ENCODE measurements at regions of chr3 and their contacts with region 1.

Region 1: GRCh38 chr3:168040607-168041208 is 55.0 kb downstream of the GOLIM4 start:
- DNase-seq: no peak
- CTCF ChIP-seq: peak; percentile 39

Region 2: GRCh38 chr3:167304077-167304476 is 736.6 kb before region 1 on chr3:
- in situ Hi-C with region 1: no loop called
- DNase-seq: no peak
- CTCF ChIP-seq: no peak

Region 3: DNA sequence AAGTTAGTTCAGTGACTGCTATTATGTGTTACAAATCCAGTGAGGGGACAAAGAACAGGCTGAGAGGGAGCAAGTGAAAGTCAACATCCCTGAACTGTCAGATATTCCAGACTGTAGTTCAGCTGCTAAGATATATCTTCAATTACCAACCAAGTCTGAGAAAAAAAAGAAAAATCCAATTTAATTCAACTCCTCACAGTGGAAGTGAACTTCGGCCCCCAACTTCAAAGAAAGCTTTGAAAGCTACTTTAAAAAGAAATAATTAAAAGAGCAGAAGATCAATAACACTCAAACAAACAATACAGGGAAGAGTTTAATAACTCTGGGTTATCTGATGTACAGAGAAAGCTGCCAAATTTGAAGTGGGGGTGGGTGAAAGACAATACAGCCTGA is 131.2 kb before region 1 on chr3:
- in situ Hi-C with region 1: no loop called
- DNase-seq: no peak
- CTCF ChIP-seq: no peak

Region 4: DNA sequence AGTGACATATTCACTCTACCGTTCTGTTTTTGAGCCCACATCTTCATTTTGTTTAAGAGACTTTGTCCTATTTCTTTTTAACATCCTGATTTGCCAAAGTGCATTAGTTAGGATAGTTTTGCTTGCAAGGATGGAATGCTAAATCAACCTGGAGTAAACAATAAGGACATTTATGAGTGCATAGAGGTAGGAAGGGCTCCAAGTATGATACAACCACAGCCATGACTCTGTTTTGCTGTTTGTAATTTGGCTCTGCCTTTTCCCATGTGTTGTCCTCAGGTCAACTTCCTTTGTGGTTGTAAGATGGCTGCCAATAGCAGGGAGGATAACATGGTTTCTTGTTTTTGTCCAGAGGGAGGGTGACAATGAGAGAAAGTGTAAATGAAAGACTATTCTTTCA is 121.5 kb after region 1 on chr3:
- in situ Hi-C with region 1: loop called (anchors 5 kb)
- DNase-seq: no peak
- CTCF ChIP-seq: no peak

Measured in GM13977 (cell line).